Activated CD4-positive, alpha-beta T cell treated with anti-CD3 and anti-CD28 coated beads for 36 hours (primary cell): ENCODE measurements at regions of chr1 and their contacts with region 1.

Region 1: DNA sequence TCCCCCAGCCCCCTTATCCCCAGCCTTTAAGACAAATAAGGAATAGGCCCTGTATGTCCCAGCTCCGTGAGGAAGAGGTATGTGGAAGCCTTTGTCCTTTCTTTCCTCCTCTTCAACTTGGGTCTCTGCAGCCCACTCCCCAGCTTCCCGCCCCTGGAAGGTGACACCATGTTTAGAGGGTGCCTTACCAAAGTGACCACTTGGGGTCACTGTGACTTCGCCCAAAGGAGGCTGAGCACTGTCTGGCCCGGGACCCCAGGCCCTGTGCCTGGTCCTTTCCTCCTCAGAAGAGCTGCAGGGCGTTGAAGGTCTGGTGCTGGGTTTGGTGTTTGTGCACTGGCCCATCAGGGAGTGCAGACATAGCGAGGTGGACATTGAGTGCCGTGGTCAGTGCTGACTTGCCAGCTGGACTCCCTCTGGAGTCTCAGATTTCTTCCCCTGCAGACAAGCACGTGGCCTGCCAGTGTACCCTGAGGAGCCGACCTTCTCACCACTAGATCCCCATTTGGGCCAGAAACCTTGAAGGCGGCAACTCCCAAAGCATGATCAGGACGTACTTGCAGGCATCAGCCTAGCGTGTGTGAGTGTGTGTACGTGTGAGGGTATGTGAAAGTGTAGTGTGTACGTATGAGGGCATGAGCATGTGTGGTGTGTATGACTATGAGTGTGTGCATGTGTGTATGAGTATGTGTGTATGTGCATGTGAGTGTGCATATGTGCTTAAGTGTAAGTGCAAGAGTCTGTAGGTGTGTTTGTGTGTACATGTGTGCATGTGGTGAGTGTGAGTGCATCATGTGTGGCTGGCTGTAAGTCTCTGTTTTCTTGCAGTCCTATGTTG is 181.4 kb upstream of the KIAA0040 start:
- DNase-seq: peak; percentile 50
- ATAC-seq: peak; percentile 70
- H3K4me3 Mint-ChIP-seq: no peak overlapping the region
- H3K27ac Mint-ChIP-seq: no peak overlapping the region
- H3K4me1 Mint-ChIP-seq: no peaks in the 10 kb centered on the region
- H3K27me3 Mint-ChIP-seq: no peaks in the 10 kb centered on the region

Region 2: DNA sequence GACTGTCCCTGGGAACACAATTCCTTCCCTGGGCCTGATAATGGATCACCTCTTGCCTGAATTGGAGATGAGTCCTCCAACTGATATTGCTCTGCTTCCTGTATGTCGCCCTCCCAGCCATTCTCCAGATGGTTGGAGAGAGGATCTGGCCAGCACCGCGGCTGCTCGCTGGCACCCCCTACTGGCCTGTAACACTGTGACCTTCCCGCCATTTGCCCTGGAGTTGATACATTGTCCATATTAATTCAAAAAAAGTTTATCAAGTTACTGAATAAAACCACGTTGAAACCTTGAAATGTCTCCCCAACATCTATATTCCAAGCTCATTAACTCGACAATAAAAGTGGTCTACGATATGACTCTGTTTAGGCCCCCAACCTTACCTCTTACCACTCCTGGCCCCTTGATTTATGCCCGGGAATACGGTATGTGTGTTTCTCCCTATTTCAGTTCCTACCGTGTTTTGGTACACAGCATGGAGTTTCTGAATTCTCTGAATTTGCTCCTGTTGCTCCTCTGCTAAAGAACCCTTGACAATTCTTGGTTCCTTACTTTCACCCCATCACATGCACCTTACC is 60.4 kb after region 1 on chr1:
- CTCF ChIA-PET with region 1: interaction called, 5 read pairs
- POLR2A ChIA-PET with region 1: no interaction called
- intact Hi-C with region 1: loop called in 1 of 2 experiments (anchors 1 kb)
- DNase-seq: peak; percentile 39
- ATAC-seq: no peak
- H3K4me3 Mint-ChIP-seq: no peak overlapping the region
- H3K27ac Mint-ChIP-seq: no peak overlapping the region
- H3K4me1 Mint-ChIP-seq: no peaks in the 10 kb centered on the region
- H3K27me3 Mint-ChIP-seq: peaks cover 32% of the 10 kb centered on the region

Region 3: GRCh38 chr1:175757381-175758015 is 383.5 kb after region 1 on chr1:
- CTCF ChIA-PET with region 1: no interaction called
- POLR2A ChIA-PET with region 1: no interaction called
- intact Hi-C with region 1: loop called in 1 of 2 experiments (anchors 10 kb)
- DNase-seq: peak; percentile 61
- ATAC-seq: peak; percentile 82
- H3K4me3 Mint-ChIP-seq: no peak overlapping the region
- H3K27ac Mint-ChIP-seq: no peak overlapping the region
- H3K4me1 Mint-ChIP-seq: no peaks in the 10 kb centered on the region
- H3K27me3 Mint-ChIP-seq: peaks cover 9% of the 10 kb centered on the region

Region 4: DNA sequence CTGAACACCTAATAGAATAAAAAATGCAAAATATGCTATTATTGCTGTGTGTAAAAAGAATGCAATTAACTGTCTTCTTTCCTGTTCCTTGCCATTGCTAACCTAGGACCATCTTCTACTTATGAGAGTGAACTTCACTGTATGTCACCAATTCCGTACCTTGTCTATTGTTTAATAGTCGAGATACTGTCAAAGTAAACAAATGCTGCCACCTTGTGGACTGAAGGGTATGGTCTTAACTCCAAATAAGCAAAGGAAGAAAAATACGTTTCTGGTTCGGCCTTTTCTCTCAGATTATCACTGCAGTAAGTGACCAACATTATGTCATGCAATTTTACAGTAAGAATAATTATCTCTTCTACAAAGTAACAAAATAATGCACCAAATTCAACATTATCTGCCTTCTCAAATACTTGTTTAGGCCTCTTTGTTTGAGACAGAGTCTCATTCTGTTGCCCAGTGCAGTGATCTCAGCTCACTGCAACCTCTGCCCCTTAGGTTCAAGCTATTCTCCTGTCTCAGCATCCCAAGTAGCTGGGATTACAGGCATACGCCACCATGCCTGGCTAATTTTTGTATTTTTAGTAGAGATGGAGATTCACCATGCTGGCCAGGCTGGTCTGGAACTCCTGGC is 699.6 kb after region 1 on chr1:
- CTCF ChIA-PET with region 1: no interaction called
- POLR2A ChIA-PET with region 1: no interaction called
- intact Hi-C with region 1: loop called in 1 of 2 experiments (anchors 5 kb)
- DNase-seq: peak; percentile 39
- ATAC-seq: peak; percentile 61
- H3K4me3 Mint-ChIP-seq: no peak overlapping the region
- H3K27ac Mint-ChIP-seq: no peak overlapping the region
- H3K4me1 Mint-ChIP-seq: peaks cover 3% of the 10 kb centered on the region
- H3K27me3 Mint-ChIP-seq: no peaks in the 10 kb centered on the region